Activated T-helper 1 cell treated with anti-CD3 and anti-CD28 coated beads, Interleukin-12 subunit alpha, Interleukin-12 subunit beta, Interleukin-2, Interleukin-4 antibody, amounts not matched to agents 30 ng/mL and 10 ng/mL and 1 ng/mL, durations not matched to agents 14 hours and 24 hours and 36 hours (primary cell): ENCODE measurements at regions of chr6 and their contacts with region 1.

Region 1: DNA sequence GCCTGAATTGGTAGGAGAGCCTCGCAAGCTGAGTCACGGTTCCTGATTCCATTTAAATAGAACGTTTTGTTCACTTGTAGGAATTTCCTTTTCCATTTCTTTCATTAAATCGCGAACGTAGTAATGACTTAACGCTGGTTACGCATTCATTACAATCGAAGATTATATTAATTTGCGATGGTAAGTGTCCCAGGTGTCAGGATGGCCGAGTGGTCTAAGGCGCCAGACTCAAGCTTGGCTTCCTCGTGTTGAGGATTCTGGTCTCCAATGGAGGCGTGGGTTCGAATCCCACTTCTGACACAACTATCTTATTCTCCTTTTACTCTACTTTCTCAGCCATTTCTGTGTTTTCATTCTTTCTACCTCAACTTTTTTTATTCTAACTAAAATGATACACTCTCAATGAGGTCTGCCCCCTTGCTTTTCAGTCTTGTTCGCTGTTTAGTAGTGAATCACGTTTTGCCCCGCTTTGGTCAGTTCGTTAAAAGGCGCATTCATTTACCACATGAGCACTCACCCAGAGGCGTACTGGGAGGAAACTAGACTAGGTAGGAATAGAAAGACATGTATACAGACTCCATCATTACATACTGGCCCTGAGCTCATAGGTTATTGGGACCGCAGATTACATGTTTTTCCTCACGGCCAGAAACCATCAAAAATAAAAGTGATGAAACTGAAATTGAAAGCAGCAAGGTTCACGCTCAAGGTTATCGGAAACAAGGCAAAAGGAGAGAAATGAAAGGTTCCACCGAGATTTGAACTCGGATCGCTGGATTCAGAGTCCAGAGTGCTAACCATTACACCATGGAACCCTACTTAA is 17.3 kb upstream of the TRIM27 start:
- DNase-seq: peak; percentile 73
- H3K4me3 Mint-ChIP-seq: peak overlapping the region; percentile 95
- H3K27ac Mint-ChIP-seq: peak overlapping the region; percentile 97
- H3K4me1 Mint-ChIP-seq: peaks cover 59% of the 10 kb centered on the region
- H3K27me3 Mint-ChIP-seq: peaks cover 10% of the 10 kb centered on the region

Region 2: DNA sequence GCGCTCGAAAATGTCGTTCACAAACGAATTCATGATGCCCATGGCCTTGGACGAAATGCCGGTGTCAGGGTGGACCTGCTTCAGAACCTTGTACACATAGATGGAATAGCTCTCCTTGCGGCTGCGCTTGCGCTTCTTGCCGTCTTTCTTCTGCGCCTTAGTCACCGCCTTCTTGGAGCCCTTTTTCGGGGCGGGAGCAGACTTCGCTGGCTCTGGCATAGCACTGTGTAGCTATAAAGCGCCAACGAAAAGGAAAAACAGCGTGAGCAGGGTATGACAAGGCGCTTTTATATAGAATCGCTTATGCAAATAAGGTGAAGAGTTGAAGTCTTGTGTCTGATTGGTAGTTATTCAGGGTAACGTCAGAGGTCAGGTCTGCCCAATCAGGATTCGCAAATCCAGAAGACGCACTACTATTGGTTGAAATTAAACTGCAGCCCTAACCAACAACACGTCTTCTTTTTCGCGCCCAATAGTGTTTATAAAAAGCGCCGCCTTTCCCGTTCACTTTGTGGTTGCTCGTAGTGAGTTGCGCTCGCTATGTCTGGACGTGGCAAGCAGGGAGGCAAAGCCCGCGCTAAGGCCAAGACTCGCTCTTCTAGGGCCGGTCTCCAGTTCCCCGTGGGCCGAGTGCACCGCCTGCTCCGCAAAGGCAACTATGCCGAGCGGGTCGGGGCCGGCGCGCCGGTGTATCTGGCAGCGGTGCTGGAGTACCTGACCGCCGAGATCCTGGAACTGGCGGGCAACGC is 1808.4 kb before region 1 on chr6:
- intact Hi-C with region 1: loop called (anchors 5 kb)
- DNase-seq: peak; percentile 92
- H3K4me3 Mint-ChIP-seq: no peak overlapping the region
- H3K27ac Mint-ChIP-seq: no peak overlapping the region
- H3K4me1 Mint-ChIP-seq: peaks cover 34% of the 10 kb centered on the region
- H3K27me3 Mint-ChIP-seq: no peaks in the 10 kb centered on the region

Region 3: DNA sequence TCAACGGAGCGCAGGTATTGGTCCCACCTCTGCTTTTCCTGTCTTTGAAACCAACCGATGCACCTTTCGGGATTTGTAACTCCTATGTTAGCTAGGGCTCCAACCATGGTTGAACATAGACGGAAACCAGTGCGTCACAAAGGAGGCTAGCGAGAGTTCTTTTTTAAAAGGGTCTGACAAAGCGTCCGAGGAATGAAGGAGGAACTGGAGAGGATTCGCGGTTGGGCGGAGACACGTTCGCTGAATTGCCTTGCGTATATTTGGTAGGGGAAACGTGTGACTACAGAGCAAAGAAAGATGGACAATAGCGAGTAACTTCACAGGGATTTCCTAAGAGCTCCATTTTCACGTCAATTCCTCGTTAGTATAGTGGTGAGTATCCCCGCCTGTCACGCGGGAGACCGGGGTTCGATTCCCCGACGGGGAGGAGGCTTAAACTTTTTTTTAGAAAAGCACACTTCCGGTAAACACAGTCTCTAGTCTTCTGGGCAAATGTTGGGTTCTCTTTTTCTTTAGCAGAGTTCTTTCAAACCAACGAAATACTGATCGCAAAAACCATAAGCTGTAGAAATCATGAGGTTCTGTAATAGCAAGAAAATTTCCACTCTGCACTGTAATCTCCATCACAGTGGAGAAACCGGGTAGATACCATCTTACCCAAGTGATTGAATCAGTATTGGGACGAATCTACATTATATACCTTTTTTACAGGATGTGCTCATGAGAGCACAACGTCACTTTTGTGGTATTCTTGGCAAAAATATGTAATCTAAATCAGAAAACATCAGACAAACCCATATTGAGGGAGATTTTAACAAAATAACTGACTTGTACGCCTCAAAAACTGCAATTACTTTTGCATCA is 1461.5 kb before region 1 on chr6:
- intact Hi-C with region 1: loop called (anchors 5 kb)
- DNase-seq: peak; percentile 81
- H3K4me3 Mint-ChIP-seq: no peak overlapping the region
- H3K27ac Mint-ChIP-seq: no peak overlapping the region
- H3K4me1 Mint-ChIP-seq: no peaks in the 10 kb centered on the region
- H3K27me3 Mint-ChIP-seq: peaks cover 10% of the 10 kb centered on the region

Region 4: DNA sequence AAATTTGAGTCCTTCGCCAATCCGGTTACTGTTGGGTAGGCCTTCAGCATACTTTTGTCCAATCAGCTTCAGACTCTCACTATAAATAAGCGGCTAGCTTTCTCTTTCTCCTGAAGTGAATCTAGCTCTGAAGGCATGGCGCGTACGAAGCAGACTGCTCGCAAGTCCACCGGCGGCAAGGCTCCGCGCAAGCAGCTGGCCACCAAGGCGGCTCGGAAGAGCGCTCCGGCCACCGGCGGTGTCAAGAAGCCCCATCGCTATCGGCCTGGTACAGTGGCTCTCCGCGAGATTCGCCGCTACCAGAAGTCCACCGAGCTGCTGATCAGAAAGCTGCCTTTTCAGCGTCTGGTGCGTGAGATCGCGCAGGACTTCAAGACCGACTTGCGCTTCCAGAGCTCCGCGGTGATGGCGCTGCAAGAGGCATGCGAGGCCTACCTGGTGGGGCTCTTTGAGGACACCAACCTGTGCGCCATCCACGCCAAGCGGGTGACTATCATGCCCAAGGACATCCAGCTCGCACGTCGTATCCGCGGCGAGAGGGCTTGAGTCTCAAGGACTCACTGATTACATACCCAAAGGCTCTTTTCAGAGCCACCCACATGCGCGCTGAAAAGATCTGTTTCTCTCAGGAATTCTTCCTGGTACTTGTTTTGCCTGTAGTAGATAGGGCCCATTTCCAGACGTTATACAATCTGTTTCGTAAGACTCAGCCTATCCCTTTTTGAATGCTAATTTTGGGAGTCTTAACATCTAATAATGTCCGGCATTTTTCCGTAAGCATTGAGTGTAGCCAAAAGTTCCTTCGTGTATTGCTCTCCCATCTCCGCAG is 1130.9 kb before region 1 on chr6:
- intact Hi-C with region 1: loop called (anchors 5 kb)
- DNase-seq: peak; percentile 83
- H3K4me3 Mint-ChIP-seq: peak overlapping the region; percentile 91
- H3K27ac Mint-ChIP-seq: peak overlapping the region; percentile 96
- H3K4me1 Mint-ChIP-seq: peaks cover 78% of the 10 kb centered on the region
- H3K27me3 Mint-ChIP-seq: no peaks in the 10 kb centered on the region

Region 5: GRCh38 chr6:27830212-27830599 is 1110.9 kb before region 1 on chr6:
- intact Hi-C with region 1: no loop called
- DNase-seq: no peak
- H3K4me3 Mint-ChIP-seq: peak overlapping the region; percentile 93
- H3K27ac Mint-ChIP-seq: peak overlapping the region; percentile 99
- H3K4me1 Mint-ChIP-seq: peaks cover 46% of the 10 kb centered on the region
- H3K27me3 Mint-ChIP-seq: peaks cover 3% of the 10 kb centered on the region

Region 6: GRCh38 chr6:28657769-28658465 is 283.2 kb before region 1 on chr6:
- intact Hi-C with region 1: loop called (anchors 5 kb)
- DNase-seq: no peak
- H3K4me3 Mint-ChIP-seq: peak overlapping the region; percentile 80
- H3K27ac Mint-ChIP-seq: peak overlapping the region; percentile 77
- H3K4me1 Mint-ChIP-seq: peaks cover 24% of the 10 kb centered on the region
- H3K27me3 Mint-ChIP-seq: peaks cover 66% of the 10 kb centered on the region

Region 7: DNA sequence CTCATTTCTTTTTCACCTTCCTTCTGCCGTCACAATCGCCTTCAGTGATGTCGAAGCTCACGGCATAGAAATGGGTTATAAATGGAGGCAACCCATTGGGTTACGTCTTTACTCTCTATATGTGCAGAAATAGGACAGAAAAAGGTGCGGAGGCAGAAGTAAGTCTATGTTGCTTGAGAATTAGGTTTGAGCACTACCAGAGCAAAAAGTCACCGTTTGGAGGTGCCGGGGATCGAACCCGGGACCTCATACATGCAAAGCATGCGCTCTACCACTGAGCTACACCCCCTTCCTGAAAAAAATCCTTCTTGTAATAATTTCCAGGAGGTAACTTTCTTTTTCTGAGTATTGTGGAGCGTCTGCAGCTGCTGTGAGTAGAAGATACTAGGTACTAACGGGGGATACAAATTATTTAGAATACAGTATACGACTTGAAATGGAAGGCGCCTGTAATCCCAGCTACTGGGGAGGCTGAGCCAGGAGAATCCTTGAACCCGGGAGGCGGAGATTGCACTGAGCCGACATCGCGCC is 151.5 kb before region 1 on chr6:
- intact Hi-C with region 1: no loop called
- DNase-seq: no peak
- H3K4me3 Mint-ChIP-seq: peak overlapping the region; percentile 62
- H3K27ac Mint-ChIP-seq: peak overlapping the region; percentile 67
- H3K4me1 Mint-ChIP-seq: peaks cover 22% of the 10 kb centered on the region
- H3K27me3 Mint-ChIP-seq: peaks cover 86% of the 10 kb centered on the region

Region 8: GRCh38 chr6:28880894-28881780 is 59.9 kb before region 1 on chr6:
- intact Hi-C with region 1: loop called (anchors 5 kb)
- DNase-seq: peak; percentile 30
- H3K4me3 Mint-ChIP-seq: peak overlapping the region; percentile 76
- H3K27ac Mint-ChIP-seq: peak overlapping the region; percentile 81
- H3K4me1 Mint-ChIP-seq: peaks cover 34% of the 10 kb centered on the region
- H3K27me3 Mint-ChIP-seq: peaks cover 36% of the 10 kb centered on the region

Region 9: GRCh38 chr6:28953039-28953584 is 12.0 kb after region 1 on chr6:
- intact Hi-C with region 1: loop called (anchors 1 kb)
- DNase-seq: peak; percentile 28
- H3K4me3 Mint-ChIP-seq: peak overlapping the region; percentile 81
- H3K27ac Mint-ChIP-seq: peak overlapping the region; percentile 74
- H3K4me1 Mint-ChIP-seq: peaks cover 30% of the 10 kb centered on the region
- H3K27me3 Mint-ChIP-seq: peaks cover 14% of the 10 kb centered on the region